ENCODE measurements at regions of chr6 and their contacts with region 1.

Region 1: DNA sequence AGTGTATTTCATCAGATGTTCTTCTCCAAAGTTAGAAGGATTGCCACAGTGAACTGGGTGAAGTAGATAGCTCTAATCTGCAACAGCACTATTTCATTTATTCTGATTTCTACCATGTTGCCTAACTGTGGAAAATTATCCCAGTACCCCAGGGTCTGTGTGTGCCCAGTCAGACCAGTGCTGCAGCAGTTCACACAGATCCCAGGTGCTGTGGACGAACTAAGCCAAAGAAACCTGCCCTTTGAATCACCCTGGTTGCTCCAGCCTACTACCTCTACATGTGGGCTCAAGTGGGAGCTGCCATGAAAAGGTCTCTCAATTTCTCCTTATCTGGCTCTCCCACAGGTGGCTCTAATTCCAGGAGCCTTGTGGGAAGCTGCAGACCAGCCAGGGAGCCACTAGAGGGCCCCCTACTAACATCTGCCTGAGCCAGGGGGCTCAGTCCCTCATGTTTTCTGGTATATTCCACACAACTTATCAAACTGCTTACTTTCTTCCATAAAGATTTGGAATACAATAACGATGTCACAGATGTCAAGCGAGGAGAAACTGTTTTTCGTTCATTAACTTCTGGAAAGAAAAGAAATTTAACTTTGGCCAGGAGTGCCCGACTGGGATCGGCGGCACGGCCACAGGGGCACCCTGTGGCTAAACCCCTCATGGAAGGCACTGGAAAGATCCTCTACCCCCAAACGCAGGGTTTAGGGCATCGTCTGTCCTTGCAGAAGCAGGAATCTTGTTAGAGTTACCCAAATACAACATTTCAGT is 31.6 kb upstream of the LY86 start:
- DNase-seq: peak; percentile 70
- ATAC-seq: peak; percentile 76
- H3K4me3 ChIP-seq: no peak overlapping the region
- H3K4me3 Mint-ChIP-seq: no peak overlapping the region
- H3K27ac ChIP-seq: no peak overlapping the region
- H3K27ac Mint-ChIP-seq: no peak overlapping the region
- H3K4me1 ChIP-seq: no peaks in the 10 kb centered on the region
- H3K4me1 Mint-ChIP-seq: no peaks in the 10 kb centered on the region
- H3K27me3 ChIP-seq: no peaks in the 10 kb centered on the region
- H3K27me3 Mint-ChIP-seq: no peaks in the 10 kb centered on the region
- CTCF ChIP-seq: peak; percentile 94

Region 2: DNA sequence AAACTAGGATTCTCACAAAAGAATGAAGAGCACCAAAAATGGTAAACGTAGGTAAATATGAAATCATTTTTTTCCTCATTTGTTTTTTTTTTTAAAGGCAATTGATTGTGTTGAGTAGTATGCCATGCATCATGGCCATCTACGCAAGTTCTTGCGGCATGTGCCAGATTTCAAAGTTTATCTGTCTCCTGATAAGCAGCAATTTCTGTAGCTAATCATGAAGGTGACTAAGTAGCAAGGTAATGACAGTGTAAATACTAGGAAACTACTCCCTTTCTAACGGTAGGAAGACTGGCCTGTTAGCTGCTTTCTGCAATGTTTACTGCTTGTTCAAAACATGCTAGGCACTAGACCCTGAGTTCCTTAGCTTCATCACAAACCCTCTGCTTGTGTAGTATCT is 18.2 kb after region 1 on chr6:
- CTCF ChIA-PET with region 1: interaction called, 171 read pairs
- POLR2A ChIA-PET with region 1: no interaction called
- intact Hi-C with region 1: no loop called
- DNase-seq: no peak
- ATAC-seq: no peak
- H3K4me3 ChIP-seq: no peak overlapping the region
- H3K4me3 Mint-ChIP-seq: no peak overlapping the region
- H3K27ac ChIP-seq: no peak overlapping the region
- H3K27ac Mint-ChIP-seq: no peak overlapping the region
- H3K4me1 ChIP-seq: peaks cover 8 to 10% of the 10 kb centered on the region in 2 donors
- H3K4me1 Mint-ChIP-seq: peaks cover 18% of the 10 kb centered on the region
- H3K27me3 ChIP-seq: no peaks in the 10 kb centered on the region
- H3K27me3 Mint-ChIP-seq: no peaks in the 10 kb centered on the region
- CTCF ChIP-seq: no peak

Region 3: DNA sequence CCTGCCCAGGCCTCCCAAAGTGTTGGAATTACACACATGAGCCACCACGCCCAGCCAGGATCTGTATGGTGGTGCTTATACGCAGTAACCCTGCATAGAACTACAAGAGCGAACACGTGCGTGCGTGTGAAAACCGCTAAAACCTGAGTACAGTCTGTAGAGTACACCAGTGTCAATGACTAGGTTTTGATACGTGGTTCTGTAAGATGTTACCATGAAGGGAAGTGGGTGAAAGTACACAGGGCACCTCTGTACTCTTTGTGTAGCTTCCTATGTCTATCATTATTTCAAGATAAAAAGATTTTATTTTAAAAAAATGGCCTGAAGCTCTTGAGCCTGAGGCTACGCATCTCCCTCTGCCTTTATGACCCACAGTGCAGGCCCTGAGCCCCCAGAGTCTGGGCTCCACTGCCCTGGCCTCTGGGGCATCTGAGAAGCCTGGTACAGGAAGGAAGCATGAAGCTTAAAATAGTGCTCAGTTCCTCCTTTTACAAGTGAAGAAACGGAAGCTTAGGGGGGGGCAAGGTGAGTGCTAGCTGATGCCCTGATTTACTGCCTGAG is 53.2 kb after region 1 on chr6:
- CTCF ChIA-PET with region 1: interaction called, 5 read pairs
- POLR2A ChIA-PET with region 1: no interaction called
- intact Hi-C with region 1: loop called (anchors 2 kb)
- DNase-seq: peak; percentile 84
- ATAC-seq: peak; percentile 95
- H3K4me3 ChIP-seq: peak overlapping the region in 3 of 5 experiments; percentile 1 to 20 (median 13)
- H3K4me3 Mint-ChIP-seq: peak overlapping the region; percentile 76
- H3K27ac ChIP-seq: peak overlapping the region; percentile 77 to 91
- H3K27ac Mint-ChIP-seq: peak overlapping the region; percentile 95
- H3K4me1 ChIP-seq: peaks cover 52 to 57% of the 10 kb centered on the region in 2 donors
- H3K4me1 Mint-ChIP-seq: peaks cover 80% of the 10 kb centered on the region
- H3K27me3 ChIP-seq: no peaks in the 10 kb centered on the region
- H3K27me3 Mint-ChIP-seq: no peaks in the 10 kb centered on the region
- CTCF ChIP-seq: no peak

Region 4: GRCh38 chr6:6646859-6647258 is 89.9 kb after region 1 on chr6:
- CTCF ChIA-PET with region 1: interaction called, 11 read pairs
- POLR2A ChIA-PET with region 1: no interaction called
- intact Hi-C with region 1: loop called (anchors 1 kb)
- DNase-seq: no peak
- ATAC-seq: no peak
- H3K4me3 ChIP-seq: no peak overlapping the region
- H3K4me3 Mint-ChIP-seq: no peak overlapping the region
- H3K27ac ChIP-seq: no peak overlapping the region
- H3K27ac Mint-ChIP-seq: no peak overlapping the region
- H3K4me1 ChIP-seq: no peaks in the 10 kb centered on the region
- H3K4me1 Mint-ChIP-seq: peaks cover 3% of the 10 kb centered on the region
- H3K27me3 ChIP-seq: no peaks in the 10 kb centered on the region
- H3K27me3 Mint-ChIP-seq: no peaks in the 10 kb centered on the region
- CTCF ChIP-seq: peak; percentile 29

Region 5: DNA sequence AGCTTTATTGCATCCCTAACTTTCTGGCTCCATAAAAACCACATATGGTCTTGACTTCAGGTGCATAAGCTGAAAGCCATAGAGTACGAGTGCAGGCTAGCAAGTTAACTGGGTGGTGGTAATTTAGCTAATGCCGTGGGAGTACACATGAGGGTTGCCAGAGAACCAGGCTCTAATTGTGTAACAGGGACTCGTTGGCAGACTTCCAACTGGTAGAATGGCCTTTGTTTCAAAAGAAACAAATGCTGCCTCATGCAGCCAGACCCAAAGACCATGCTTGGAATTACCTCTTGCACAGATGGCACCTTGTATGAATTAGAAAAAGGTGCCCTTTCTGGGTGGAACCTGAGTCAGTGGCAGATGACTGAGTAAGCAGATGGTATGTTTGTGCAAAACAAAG is 104.8 kb after region 1 on chr6:
- CTCF ChIA-PET with region 1: interaction called, 7 read pairs
- POLR2A ChIA-PET with region 1: no interaction called
- intact Hi-C with region 1: loop called (anchors 1 kb)
- DNase-seq: no peak
- ATAC-seq: no peak
- H3K4me3 ChIP-seq: no peak overlapping the region
- H3K4me3 Mint-ChIP-seq: no peak overlapping the region
- H3K27ac ChIP-seq: no peak overlapping the region
- H3K27ac Mint-ChIP-seq: no peak overlapping the region
- H3K4me1 ChIP-seq: peaks cover 28 to 33% of the 10 kb centered on the region in 2 donors
- H3K4me1 Mint-ChIP-seq: peaks cover 32% of the 10 kb centered on the region
- H3K27me3 ChIP-seq: no peaks in the 10 kb centered on the region
- H3K27me3 Mint-ChIP-seq: peaks cover 3% of the 10 kb centered on the region
- CTCF ChIP-seq: no peak

Region 6: DNA sequence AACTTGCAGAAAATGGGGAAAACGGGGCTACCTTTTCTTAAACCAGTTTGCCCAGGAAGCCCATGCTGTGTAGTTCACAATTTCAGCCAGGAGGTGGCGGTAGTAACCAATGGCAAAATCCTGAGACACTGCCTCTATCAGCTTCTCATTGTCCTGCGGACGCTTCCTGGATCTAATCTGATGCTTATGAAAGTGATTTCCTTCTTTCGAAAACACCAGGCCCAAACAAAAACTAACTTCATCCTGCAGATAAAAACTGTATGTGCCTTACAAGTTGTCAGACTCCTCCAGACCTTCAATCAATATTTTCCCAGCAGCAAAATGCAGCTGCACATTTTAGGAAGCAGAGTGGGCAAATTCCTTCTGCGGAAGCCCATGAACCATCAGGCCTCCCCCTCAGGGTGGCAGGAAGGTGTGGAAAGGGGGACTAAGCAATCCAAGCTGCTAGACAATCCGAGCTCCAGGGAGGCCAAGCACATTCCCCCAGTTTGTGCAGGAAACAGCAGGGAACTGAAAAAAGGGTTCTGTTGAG is 120.1 kb after region 1 on chr6:
- CTCF ChIA-PET with region 1: interaction called, 21 read pairs
- POLR2A ChIA-PET with region 1: no interaction called
- intact Hi-C with region 1: no loop called
- DNase-seq: peak; percentile 82
- ATAC-seq: peak; percentile 90
- H3K4me3 ChIP-seq: no peak overlapping the region
- H3K4me3 Mint-ChIP-seq: no peak overlapping the region
- H3K27ac ChIP-seq: no peak overlapping the region
- H3K27ac Mint-ChIP-seq: no peak overlapping the region
- H3K4me1 ChIP-seq: peaks cover 5 to 7% of the 10 kb centered on the region in 2 donors
- H3K4me1 Mint-ChIP-seq: peaks cover 9% of the 10 kb centered on the region
- H3K27me3 ChIP-seq: no peaks in the 10 kb centered on the region
- H3K27me3 Mint-ChIP-seq: peaks cover 5% of the 10 kb centered on the region
- CTCF ChIP-seq: peak; percentile 98

Region 7: GRCh38 chr6:7615611-7616383 is 1058.9 kb after region 1 on chr6:
- CTCF ChIA-PET with region 1: interaction called, 3 read pairs
- POLR2A ChIA-PET with region 1: no interaction called
- intact Hi-C with region 1: loop called (anchors 10 kb)
- DNase-seq: peak; percentile 68
- ATAC-seq: peak; percentile 41
- H3K4me3 ChIP-seq: no peak overlapping the region
- H3K4me3 Mint-ChIP-seq: peak overlapping the region; percentile 3
- H3K27ac ChIP-seq: no peak overlapping the region
- H3K27ac Mint-ChIP-seq: no peak overlapping the region
- H3K4me1 ChIP-seq: peaks cover 0 to 15% of the 10 kb centered on the region in 2 donors
- H3K4me1 Mint-ChIP-seq: peaks cover 5% of the 10 kb centered on the region
- H3K27me3 ChIP-seq: peaks cover 0 to 5% (median 0%) of the 10 kb centered on the region in 4 experiments
- H3K27me3 Mint-ChIP-seq: peaks cover 4% of the 10 kb centered on the region
- CTCF ChIP-seq: peak; percentile 87